AG04450 (cell line): ENCODE measurements at regions of chr1 and their contacts with region 1.

Region 1: GRCh38 chr1:155277070-155277895 is at the start of gene HCN3:
- DNase-seq: peak; percentile 85
- H3K4me3 ChIP-seq: peak within 1 kb of the TSS; percentile 74
- H3K27ac ChIP-seq: no peak within 1 kb of the TSS
- H3K27me3 ChIP-seq: no peaks in the 10 kb centered on the region
- CTCF ChIP-seq: peak; percentile 47
- polyA plus RNA-seq, gene HCN3: 1.5 and 1.7 TPM in 2 replicates

Region 2: DNA sequence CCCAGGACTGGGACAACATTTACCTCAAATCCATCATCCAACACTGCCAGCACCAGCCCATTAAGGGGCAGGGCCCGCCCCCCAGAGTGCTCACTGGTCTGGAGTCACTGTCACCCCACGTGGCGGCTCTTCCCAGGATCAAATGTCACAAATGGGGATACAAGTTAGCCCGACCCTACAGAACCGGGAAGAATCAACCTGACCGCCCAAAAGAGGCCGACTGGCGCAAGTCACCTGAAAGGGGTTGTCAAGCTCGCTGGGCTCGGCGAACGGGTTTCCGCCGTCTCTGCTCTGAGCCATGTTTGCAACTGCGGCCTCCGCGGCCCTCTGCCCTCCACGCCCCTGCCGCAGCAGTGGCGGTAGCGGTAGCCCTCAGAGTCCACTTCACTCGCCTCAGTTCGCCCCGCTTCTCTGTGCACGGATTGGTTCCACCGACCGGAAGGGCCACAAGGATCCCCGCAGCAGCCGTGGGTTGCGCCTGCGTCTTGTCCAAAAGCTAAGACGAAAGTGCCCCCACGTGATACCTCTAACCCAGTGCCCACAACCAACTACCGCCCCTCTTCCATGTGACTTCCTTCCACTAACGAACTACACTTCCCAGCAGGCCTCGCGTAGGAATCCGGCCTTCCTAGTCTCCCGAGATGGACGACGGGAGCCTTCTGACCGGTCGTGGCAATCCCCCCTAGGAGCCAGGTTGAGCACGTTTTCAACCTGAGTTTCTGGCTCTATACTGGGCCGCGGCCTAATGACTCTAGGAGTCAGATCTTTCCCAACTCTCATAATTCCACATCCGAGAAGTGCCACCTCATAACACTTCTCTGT is 15.2 kb before region 1 on chr1 and contains the start of gene SCAMP3:
- CTCF ChIA-PET with region 1: interaction called, 3 read pairs
- POLR2A ChIA-PET with region 1: interaction called, 13 read pairs
- DNase-seq: peak; percentile 96
- H3K4me3 ChIP-seq: peak within 1 kb of the TSS; percentile 96
- H3K27ac ChIP-seq: peak within 1 kb of the TSS; percentile 81
- H3K27me3 ChIP-seq: no peaks in the 10 kb centered on the region
- CTCF ChIP-seq: no peak
- polyA plus RNA-seq, gene SCAMP3: 104 and 115 TPM in 2 replicates

Region 3: GRCh38 chr1:155410931-155411330 is 133.6 kb after region 1 on chr1:
- CTCF ChIA-PET with region 1: no interaction called
- POLR2A ChIA-PET with region 1: no interaction called
- DNase-seq: no peak
- H3K4me3 ChIP-seq: no peak overlapping the region
- H3K27ac ChIP-seq: no peak overlapping the region
- H3K27me3 ChIP-seq: no peaks in the 10 kb centered on the region
- CTCF ChIP-seq: no peak